ENCODE measurements at regions of chr17 and their contacts with region 1.

Region 1: GRCh38 chr17:44331249-44331760 is 6.7 kb upstream of the SLC25A39 start:
- DNase-seq: peak; percentile 86
- ATAC-seq: peak; percentile 46
- H3K4me3 Mint-ChIP-seq: no peak overlapping the region
- H3K27ac Mint-ChIP-seq: no peak overlapping the region
- H3K4me1 Mint-ChIP-seq: peaks cover 13% of the 10 kb centered on the region
- H3K27me3 Mint-ChIP-seq: no peaks in the 10 kb centered on the region

Region 2: GRCh38 chr17:43891851-43892646 is 439.3 kb before region 1 on chr17:
- CTCF ChIA-PET with region 1: no interaction called
- DNase-seq: no peak
- ATAC-seq: no peak
- H3K4me3 Mint-ChIP-seq: no peak overlapping the region
- H3K27ac Mint-ChIP-seq: no peak overlapping the region
- H3K4me1 Mint-ChIP-seq: no peaks in the 10 kb centered on the region
- H3K27me3 Mint-ChIP-seq: peaks cover 27% of the 10 kb centered on the region

Region 3: DNA sequence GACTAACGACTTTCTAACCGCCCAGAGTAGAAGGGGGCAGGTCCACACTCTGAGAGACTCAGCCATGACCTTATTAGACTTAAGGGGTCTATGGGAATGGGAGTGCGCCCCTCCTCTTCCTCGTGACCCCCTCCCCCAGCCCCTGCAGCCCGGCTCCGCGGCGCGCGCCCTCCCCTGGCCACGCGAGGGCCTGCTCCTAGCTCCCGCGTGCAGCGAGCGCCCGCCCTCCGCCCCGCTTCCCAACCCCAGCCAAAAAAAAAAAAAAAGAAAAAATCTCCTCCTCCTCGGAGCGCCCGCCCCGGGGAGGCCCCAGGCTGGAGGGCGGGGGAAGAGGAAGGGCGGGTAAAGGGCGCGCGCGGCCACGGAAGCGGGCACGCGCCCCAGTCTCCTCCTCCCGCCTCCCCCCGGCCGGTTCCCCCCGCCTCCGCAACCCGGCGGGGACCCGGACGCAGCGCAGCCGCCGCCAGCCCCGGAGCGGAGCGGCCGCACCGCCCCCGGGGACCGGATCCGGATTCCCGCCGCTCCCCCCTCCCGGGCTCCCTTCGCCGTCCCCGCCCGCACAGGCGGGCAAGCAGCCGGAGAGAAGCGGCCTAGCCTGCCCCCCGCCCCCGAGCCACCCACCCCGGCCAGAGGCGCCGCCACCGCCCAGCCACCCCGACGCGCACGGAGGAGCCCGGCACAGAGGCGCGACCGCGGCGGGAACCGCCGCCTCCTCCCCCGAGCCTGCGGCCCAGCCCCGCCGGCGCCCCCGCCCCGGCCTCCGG is 112.8 kb before region 1 on chr17:
- CTCF ChIA-PET with region 1: interaction called, 14 read pairs
- DNase-seq: peak; percentile 90
- ATAC-seq: peak; percentile 63
- H3K4me3 Mint-ChIP-seq: peak overlapping the region; percentile 88
- H3K27ac Mint-ChIP-seq: peak overlapping the region; percentile 91
- H3K4me1 Mint-ChIP-seq: peaks cover 37% of the 10 kb centered on the region
- H3K27me3 Mint-ChIP-seq: no peaks in the 10 kb centered on the region

Region 4: DNA sequence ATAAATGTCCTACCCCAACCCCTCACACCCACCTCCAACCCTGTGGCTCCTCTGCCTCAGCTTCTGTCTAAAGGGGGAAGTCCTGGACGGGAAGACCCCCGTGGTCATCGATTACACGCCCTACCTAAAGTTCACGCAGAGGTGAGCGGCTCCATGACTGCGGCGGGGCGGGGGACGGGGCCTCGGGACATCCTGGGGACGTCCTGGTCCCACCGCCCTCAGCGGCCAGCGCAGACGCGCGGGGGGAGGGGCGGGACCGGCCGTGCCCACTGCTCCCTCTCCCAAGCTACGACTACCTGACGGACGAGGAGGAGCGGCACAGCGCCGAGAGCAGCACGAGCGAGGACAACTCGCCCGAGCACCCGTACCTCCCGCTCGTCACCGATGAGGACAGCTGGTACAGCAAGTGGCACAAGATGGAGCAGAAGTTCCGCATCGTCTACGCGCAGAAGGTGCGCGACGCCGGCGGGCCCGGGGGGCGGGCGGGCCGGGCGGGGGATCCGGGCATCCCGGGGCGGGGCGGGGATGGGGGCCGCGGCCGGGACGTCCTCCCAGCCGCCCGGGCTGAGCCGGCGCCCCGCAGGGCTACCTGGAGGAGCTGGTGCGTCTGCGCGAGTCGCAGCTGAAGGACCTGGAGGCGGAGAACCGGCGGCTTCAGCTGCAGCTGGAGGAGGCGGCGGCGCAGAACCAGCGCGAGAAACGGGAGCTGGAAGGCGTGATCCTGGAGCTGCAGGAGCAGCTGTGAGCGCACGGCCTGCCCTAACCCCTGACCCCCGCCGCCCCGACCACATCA is 16.2 kb before region 1 on chr17:
- CTCF ChIA-PET with region 1: interaction called, 14 read pairs
- DNase-seq: peak; percentile 56
- ATAC-seq: peak; percentile 69
- H3K4me3 Mint-ChIP-seq: peak overlapping the region; percentile 59
- H3K27ac Mint-ChIP-seq: no peak overlapping the region
- H3K4me1 Mint-ChIP-seq: peaks cover 9% of the 10 kb centered on the region
- H3K27me3 Mint-ChIP-seq: peaks cover 31% of the 10 kb centered on the region

Region 5: DNA sequence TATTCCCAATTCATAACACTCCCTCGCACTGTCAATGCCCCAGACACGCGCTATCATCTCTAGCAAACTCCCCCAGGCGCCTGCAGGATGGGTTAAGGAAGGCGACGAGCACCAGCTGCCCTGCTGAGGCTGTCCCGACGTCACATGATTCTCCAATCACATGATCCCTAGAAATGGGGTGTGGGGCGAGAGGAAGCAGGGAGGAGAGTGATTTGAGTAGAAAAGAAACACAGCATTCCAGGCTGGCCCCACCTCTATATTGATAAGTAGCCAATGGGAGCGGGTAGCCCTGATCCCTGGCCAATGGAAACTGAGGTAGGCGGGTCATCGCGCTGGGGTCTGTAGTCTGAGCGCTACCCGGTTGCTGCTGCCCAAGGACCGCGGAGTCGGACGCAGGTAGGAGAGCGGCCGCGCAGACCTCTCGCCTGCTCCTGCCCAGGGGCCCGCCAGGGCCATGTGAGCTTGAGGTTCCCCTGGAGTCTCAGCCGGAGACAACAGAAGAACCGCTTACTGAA is 13.7 kb after region 1 on chr17 and contains the start of gene GRN:
- CTCF ChIA-PET with region 1: interaction called, 40 read pairs
- DNase-seq: peak; percentile 92
- ATAC-seq: peak; percentile 99
- H3K4me3 Mint-ChIP-seq: peak within 1 kb of the TSS; percentile 82
- H3K27ac Mint-ChIP-seq: peak within 1 kb of the TSS; percentile 9
- H3K4me1 Mint-ChIP-seq: peaks cover 31% of the 10 kb centered on the region
- H3K27me3 Mint-ChIP-seq: peaks cover 11% of the 10 kb centered on the region
- total RNA-seq, gene GRN: 56.5 to 69.2 TPM

Region 6: GRCh38 chr17:44350733-44351226 is 19.5 kb after region 1 on chr17:
- CTCF ChIA-PET with region 1: interaction called, 40 read pairs
- DNase-seq: peak; percentile 81
- ATAC-seq: peak; percentile 79
- H3K4me3 Mint-ChIP-seq: no peak overlapping the region
- H3K27ac Mint-ChIP-seq: no peak overlapping the region
- H3K4me1 Mint-ChIP-seq: peaks cover 25% of the 10 kb centered on the region
- H3K27me3 Mint-ChIP-seq: peaks cover 12% of the 10 kb centered on the region

Measured in activated CD8-positive, alpha-beta memory T cell treated with anti-CD3 and anti-CD28 coated beads, Interleukin-2, amount 10 ng/mL, durations not matched to agents 7 days and 5 days (primary cell).